ENCODE measurements at regions of chr14 and their contacts with region 1.

Region 1: DNA sequence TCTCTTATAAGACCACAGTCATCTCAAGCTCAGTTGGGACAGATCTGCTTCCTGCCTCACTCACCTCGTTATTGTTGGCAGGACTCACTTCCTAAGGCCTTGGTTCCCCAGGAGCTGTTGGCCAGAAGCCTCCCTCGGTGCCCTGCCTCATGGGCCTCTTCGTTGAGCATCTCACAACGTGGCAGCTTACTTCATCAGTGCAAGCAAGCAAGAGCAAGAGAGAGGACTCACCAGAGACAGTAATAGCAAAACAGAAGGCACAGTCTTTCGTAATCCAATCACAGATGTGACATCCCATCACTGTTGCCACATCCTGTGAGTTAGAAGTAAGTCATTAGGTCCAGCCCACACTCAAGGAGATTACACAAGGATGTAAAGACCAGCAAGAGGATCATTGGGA is 5.1 kb upstream of the NUMB start:
- DNase-seq: peak in 4 of 6 donors; percentile 12 to 45 (median 42)
- ATAC-seq: peak in 1 of 4 donors; percentile 1
- H3K4me3 ChIP-seq: no peak overlapping the region
- H3K27ac ChIP-seq: peak overlapping the region in 2 of 4 donors; percentile 82 to 87
- H3K4me1 ChIP-seq: peaks cover 16 to 34% (median 30%) of the 10 kb centered on the region in 3 donors
- H3K27me3 ChIP-seq: no peaks in the 10 kb centered on the region
- CTCF ChIP-seq: no peak

Region 2: GRCh38 chr14:73173092-73173735 is 290.2 kb before region 1 on chr14:
- intact Hi-C with region 1: loop called in 1 of 3 experiments (anchors 10 kb)
- DNase-seq: no peak
- ATAC-seq: peak in 3 of 4 donors; percentile 55 to 74 (median 56)
- H3K4me3 ChIP-seq: no peak overlapping the region
- H3K27ac ChIP-seq: no peak overlapping the region
- H3K4me1 ChIP-seq: no peaks in the 10 kb centered on the region
- H3K27me3 ChIP-seq: no peaks in the 10 kb centered on the region
- CTCF ChIP-seq: peak in 3 of 4 donors; percentile 18 to 25 (median 20)

Region 3: GRCh38 chr14:73290279-73290678 is 173.1 kb before region 1 on chr14:
- intact Hi-C with region 1: loop called in 1 of 3 experiments (anchors 5 kb)
- DNase-seq: no peak
- ATAC-seq: peak in 1 of 4 donors; percentile 26
- H3K4me3 ChIP-seq: no peak overlapping the region
- H3K27ac ChIP-seq: no peak overlapping the region
- H3K4me1 ChIP-seq: peaks cover 0 to 5% (median under 1%) of the 10 kb centered on the region in 3 donors
- H3K27me3 ChIP-seq: no peaks in the 10 kb centered on the region
- CTCF ChIP-seq: no peak